GM12878 (cell line): ENCODE measurements at regions of chr18 and their contacts with region 1.

Region 1: DNA sequence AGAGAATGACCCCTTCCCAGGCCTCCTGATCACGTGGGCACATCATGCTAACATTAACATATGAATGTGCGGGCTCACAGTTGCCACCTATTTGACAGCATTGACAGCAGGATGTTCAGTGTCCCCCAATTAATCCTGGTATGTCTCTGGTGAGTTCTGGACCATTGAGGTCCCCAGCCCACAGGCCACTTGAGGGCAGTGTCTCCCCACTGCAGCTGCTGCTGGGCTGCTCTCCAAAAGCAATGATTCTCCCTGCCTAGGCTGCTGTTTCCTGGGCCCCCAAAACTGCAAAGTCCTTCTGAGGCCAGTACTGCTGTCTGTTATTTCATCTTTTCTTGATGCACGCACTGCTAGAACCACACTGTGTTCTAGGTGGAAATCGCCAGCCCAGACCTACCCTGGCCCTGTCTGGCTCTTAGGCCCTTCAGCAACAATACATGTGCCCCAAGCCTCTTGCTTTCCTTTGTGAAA is 52.7 kb upstream of the MAPK4 start:
- DNase-seq: no peak
- ATAC-seq: peak; percentile 73
- H3K4me3 ChIP-seq: no peak overlapping the region
- H3K27ac ChIP-seq: no peak overlapping the region
- H3K4me1 ChIP-seq: no peaks in the 10 kb centered on the region
- H3K27me3 ChIP-seq: no peaks in the 10 kb centered on the region
- CTCF ChIP-seq: peak; percentile 53 to 60 (median 55)
- EP300 ChIP-seq: no peak
- POLR2A ChIP-seq: no peak
- RAD21 ChIP-seq: peak; percentile 61

Region 2: DNA sequence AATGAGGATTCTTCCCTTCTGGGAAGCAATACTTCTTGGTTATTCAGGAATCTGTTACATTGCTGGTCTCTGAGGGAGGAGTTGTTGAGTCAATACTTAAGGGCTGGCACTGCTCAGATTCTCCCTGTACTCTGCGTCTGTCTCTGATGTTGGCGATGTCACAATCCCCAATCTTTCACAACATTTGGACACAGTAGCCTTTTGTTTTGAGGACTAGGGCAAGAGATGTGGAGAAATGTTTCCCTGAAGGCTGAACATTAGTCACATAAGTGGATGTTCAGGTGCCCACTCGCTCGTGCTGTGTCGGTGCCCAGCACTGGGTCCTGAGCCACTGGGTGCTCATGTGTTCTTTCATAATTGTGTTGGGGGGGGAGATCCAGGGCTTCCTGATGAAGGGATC is 107.7 kb after region 1 on chr18:
- CTCF ChIA-PET with region 1: no interaction called
- POLR2A ChIA-PET with region 1: no interaction called
- RAD21 ChIA-PET with region 1: no interaction called
- SMC1A ChIA-PET with region 1: no interaction called
- in situ Hi-C with region 1: no loop called
- intact Hi-C with region 1: no loop called
- DNase-seq: no peak
- ATAC-seq: no peak
- H3K4me3 ChIP-seq: no peak overlapping the region
- H3K27ac ChIP-seq: no peak overlapping the region
- H3K4me1 ChIP-seq: no peaks in the 10 kb centered on the region
- H3K27me3 ChIP-seq: no peaks in the 10 kb centered on the region; a peak in 1 of 4 replicates
- CTCF ChIP-seq: no peak
- EP300 ChIP-seq: no peak
- POLR2A ChIP-seq: no peak
- RAD21 ChIP-seq: no peak

Region 3: GRCh38 chr18:50644810-50645209 is 137.7 kb after region 1 on chr18:
- CTCF ChIA-PET with region 1: no interaction called
- POLR2A ChIA-PET with region 1: no interaction called
- RAD21 ChIA-PET with region 1: no interaction called
- SMC1A ChIA-PET with region 1: no interaction called
- in situ Hi-C with region 1: no loop called
- intact Hi-C with region 1: loop called (anchors 1 kb)
- DNase-seq: no peak
- ATAC-seq: peak; percentile 66
- H3K4me3 ChIP-seq: no peak overlapping the region
- H3K27ac ChIP-seq: no peak overlapping the region
- H3K4me1 ChIP-seq: no peaks in the 10 kb centered on the region
- H3K27me3 ChIP-seq: no peaks in the 10 kb centered on the region
- CTCF ChIP-seq: peak; percentile 10 to 36 (median 32); a peak in 2 of 6 replicates
- EP300 ChIP-seq: no peak
- POLR2A ChIP-seq: no peak
- RAD21 ChIP-seq: no peak

Region 4: GRCh38 chr18:50780144-50780543 is 273.0 kb after region 1 on chr18:
- CTCF ChIA-PET with region 1: no interaction called
- POLR2A ChIA-PET with region 1: no interaction called
- RAD21 ChIA-PET with region 1: no interaction called
- SMC1A ChIA-PET with region 1: no interaction called
- in situ Hi-C with region 1: no loop called
- intact Hi-C with region 1: loop called (anchors 5 kb)
- DNase-seq: no peak
- ATAC-seq: no peak
- H3K4me3 ChIP-seq: no peak overlapping the region
- H3K27ac ChIP-seq: no peak overlapping the region
- H3K4me1 ChIP-seq: no peaks in the 10 kb centered on the region
- H3K27me3 ChIP-seq: no peaks in the 10 kb centered on the region; a peak in 2 of 4 replicates
- CTCF ChIP-seq: no peak
- EP300 ChIP-seq: no peak
- POLR2A ChIP-seq: no peak
- RAD21 ChIP-seq: no peak